ENCODE measurements at regions of chr3 and their contacts with region 1.

Region 1: DNA sequence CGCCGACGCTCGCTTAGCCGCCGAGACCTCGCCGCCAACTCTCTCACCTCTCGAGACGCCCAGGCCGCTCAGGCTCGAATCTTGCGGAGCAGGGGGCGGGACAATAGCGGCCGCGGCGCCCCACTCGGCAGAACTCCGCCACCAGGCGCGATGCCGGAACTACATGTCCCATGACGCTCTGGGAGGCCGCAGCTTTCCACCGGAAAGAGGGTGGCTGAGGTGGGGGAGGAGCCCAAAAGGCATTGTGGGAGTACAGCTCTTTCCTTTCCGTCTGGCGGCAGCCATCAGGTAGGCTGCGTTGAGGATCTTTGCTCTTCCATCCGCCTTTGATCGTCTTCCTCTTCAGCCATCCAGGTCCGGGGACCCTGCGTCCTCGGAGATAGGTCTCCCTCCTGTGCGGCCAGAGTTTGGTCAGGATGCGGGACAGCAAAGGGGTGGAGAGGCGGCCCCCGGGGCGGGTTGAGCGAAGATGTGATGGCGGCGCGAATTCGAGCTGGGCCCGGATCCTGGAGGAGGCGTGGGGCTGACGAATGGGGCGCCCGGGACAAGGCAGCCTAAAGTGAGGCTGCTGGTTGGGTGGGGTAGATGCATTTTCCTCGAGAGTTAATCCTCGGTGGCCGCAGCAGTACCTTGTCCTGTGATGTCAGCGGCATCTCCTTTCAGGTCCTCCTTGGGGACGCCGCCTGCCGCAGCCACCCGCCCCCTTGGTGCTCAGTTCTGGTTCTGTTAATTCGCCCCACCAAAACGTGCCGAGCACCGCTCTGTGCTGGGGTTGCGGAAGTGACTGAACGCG is at the starts of genes NKIRAS1 and RPL15:
- DNase-seq: peak; percentile 97 to 99 (median 98)
- H3K4me3 ChIP-seq: peak within 1 kb of the TSS; percentile 92 to 99 (median 98)
- H3K27ac ChIP-seq: peak within 1 kb of the TSS; percentile 85 to 95
- H3K4me1 ChIP-seq: peaks cover 20 to 41% (median 29%) of the 10 kb centered on the region in 4 experiments
- H3K27me3 ChIP-seq: no peaks in the 10 kb centered on the region

Region 2: GRCh38 chr3:23945903-23946751 is 29.0 kb after region 1 on chr3:
- CTCF ChIA-PET with region 1: interaction called, 3 read pairs
- POLR2A ChIA-PET with region 1: interaction called, 14 read pairs
- DNase-seq: peak; percentile 96 to 98 (median 97)
- H3K4me3 ChIP-seq: peak overlapping the region; percentile 70 to 87 (median 80)
- H3K27ac ChIP-seq: peak overlapping the region; percentile 78 to 87
- H3K4me1 ChIP-seq: peaks cover 11 to 37% (median 34%) of the 10 kb centered on the region in 4 experiments
- H3K27me3 ChIP-seq: peaks cover 0 to 4% (median 0%) of the 10 kb centered on the region in 5 experiments

Region 3: GRCh38 chr3:24508423-24508839 is 591.3 kb after region 1 on chr3:
- CTCF ChIA-PET with region 1: no interaction called
- POLR2A ChIA-PET with region 1: no interaction called
- DNase-seq: no peak
- H3K4me3 ChIP-seq: no peak overlapping the region
- H3K27ac ChIP-seq: no peak overlapping the region
- H3K4me1 ChIP-seq: peaks cover 0 to 6% (median 3%) of the 10 kb centered on the region in 4 experiments
- H3K27me3 ChIP-seq: no peaks in the 10 kb centered on the region